WTC11 (cell line): ENCODE measurements at regions of chr1 and their contacts with region 1.

Region 1: GRCh38 chr1:26889551-26890466 is at the start of gene GPN2:
- DNase-seq: peak; percentile 67
- ATAC-seq: peak; percentile 89
- H3K4me3 Mint-ChIP-seq: peak within 1 kb of the TSS; percentile 97
- H3K27ac Mint-ChIP-seq: peak within 1 kb of the TSS; percentile 95
- H3K4me1 Mint-ChIP-seq: peaks cover 8% of the 10 kb centered on the region
- H3K27me3 Mint-ChIP-seq: no peaks in the 10 kb centered on the region
- CTCF ChIP-seq: no peak
- total RNA-seq, gene GPN2: 31.7 to 38.5 TPM (median 34.2 TPM) in 3 replicates

Region 2: DNA sequence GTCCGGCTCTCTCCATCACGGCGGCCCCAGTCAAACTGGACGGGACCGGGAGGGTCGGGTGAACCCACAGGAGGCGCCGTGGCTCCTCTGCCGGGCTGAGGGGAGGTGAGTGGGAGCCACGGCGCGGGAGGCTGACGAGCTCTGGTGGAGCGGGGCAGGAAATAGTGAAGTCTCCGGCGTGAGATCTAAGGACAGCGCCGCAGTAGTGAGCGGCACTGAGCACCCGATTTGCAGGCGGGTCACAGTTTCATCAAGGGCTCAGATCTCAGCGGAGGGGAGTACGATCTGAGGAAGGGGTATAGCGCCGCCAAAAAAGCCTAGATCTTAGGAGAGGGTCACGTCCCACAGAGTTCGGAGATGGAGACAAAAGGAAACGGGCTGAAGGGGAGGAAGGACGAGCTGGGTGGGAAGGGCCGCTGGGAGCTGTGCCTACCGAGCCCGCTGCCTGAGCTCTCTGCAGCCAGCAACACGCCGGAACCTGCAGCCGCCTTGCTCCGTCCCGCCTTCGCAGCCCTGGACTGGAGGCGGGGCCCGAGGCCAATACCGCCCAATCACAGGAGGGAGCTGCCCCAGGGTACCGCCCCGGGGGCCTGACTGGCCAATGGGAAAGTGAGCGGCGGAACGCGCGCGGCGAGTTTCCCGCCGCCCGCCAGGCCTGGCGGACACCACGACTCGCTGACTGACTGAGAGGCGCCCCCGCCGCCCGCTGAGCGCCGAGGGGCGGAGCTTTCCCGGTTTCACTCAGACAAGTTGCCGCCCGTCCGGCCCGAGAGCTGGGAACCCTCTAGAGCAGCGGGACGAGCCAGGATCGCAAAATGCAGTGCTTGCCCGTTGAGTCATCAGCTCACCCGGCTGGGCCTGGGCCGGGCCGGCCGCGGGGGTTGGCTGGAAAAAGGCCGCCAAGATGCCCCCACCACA is 24.9 kb before region 1 on chr1:
- CTCF ChIA-PET with region 1: interaction called, 10 read pairs
- POLR2A ChIA-PET with region 1: interaction called, 10 read pairs
- DNase-seq: peak; percentile 98
- ATAC-seq: peak; percentile 87
- H3K4me3 Mint-ChIP-seq: peak overlapping the region; percentile 94
- H3K27ac Mint-ChIP-seq: peak overlapping the region; percentile 96
- H3K4me1 Mint-ChIP-seq: peaks cover 50% of the 10 kb centered on the region
- H3K27me3 Mint-ChIP-seq: peaks cover 16% of the 10 kb centered on the region
- CTCF ChIP-seq: no peak

Region 3: GRCh38 chr1:26877326-26877725 is 12.5 kb before region 1 on chr1:
- CTCF ChIA-PET with region 1: interaction called, 12 read pairs
- POLR2A ChIA-PET with region 1: no interaction called
- DNase-seq: no peak
- ATAC-seq: no peak
- H3K4me3 Mint-ChIP-seq: no peak overlapping the region
- H3K27ac Mint-ChIP-seq: no peak overlapping the region
- H3K4me1 Mint-ChIP-seq: 0 out of 2 replicates have a peak, but pooled peaks cover 3% of the 10 kb centered on the region
- H3K27me3 Mint-ChIP-seq: no peaks in the 10 kb centered on the region
- CTCF ChIP-seq: no peak

Region 4: GRCh38 chr1:26900001-26900814 is 10.4 kb after region 1 on chr1 and contains the start of gene GPATCH3:
- CTCF ChIA-PET with region 1: interaction called, 11 read pairs
- POLR2A ChIA-PET with region 1: interaction called, 15 read pairs
- DNase-seq: peak; percentile 94
- ATAC-seq: peak; percentile 92
- H3K4me3 Mint-ChIP-seq: peak within 1 kb of the TSS; percentile 95
- H3K27ac Mint-ChIP-seq: peak within 1 kb of the TSS; percentile 98
- H3K4me1 Mint-ChIP-seq: peaks cover 11% of the 10 kb centered on the region
- H3K27me3 Mint-ChIP-seq: no peaks in the 10 kb centered on the region; the same call in 1 of the 2 replicates
- CTCF ChIP-seq: no peak
- total RNA-seq, gene GPATCH3: 16.1 to 19.2 TPM (median 16.3 TPM) in 3 replicates

Region 5: DNA sequence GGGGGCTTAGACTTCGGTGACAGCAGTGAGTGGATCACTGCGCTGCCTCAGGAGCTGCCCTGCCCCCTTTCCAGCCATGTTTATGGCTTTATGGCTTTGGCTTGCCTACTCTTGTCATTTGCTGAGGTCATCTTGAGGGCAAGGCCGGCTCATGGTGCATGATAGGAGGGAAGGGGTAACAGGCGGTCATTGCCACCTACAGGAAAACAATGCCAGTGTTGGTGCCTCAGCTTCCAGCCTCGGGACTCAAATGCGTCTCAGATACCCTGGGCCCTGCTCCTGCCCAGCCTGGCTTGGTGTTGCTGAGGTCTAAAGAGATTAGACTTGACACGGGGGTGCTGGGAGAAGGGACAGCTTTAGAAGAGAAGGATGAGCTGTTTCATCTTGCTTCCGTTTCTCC is 55.9 kb after region 1 on chr1:
- CTCF ChIA-PET with region 1: no interaction called
- POLR2A ChIA-PET with region 1: no interaction called
- DNase-seq: no peak
- ATAC-seq: no peak
- H3K4me3 Mint-ChIP-seq: no peak overlapping the region
- H3K27ac Mint-ChIP-seq: no peak overlapping the region
- H3K4me1 Mint-ChIP-seq: no peaks in the 10 kb centered on the region
- H3K27me3 Mint-ChIP-seq: no peaks in the 10 kb centered on the region
- CTCF ChIP-seq: no peak